Activated CD4-positive, alpha-beta T cell treated with anti-CD3 and anti-CD28 coated beads for 36 hours (primary cell): ENCODE measurements at regions of chr9 and their contacts with region 1.

Region 1: GRCh38 chr9:105414947-105415661 is 32.7 kb upstream of the FSD1L start:
- DNase-seq: peak; percentile 70
- ATAC-seq: peak; percentile 71
- H3K4me3 Mint-ChIP-seq: no peak overlapping the region
- H3K27ac Mint-ChIP-seq: no peak overlapping the region
- H3K4me1 Mint-ChIP-seq: no peaks in the 10 kb centered on the region
- H3K27me3 Mint-ChIP-seq: peaks cover 36% of the 10 kb centered on the region

Region 2: DNA sequence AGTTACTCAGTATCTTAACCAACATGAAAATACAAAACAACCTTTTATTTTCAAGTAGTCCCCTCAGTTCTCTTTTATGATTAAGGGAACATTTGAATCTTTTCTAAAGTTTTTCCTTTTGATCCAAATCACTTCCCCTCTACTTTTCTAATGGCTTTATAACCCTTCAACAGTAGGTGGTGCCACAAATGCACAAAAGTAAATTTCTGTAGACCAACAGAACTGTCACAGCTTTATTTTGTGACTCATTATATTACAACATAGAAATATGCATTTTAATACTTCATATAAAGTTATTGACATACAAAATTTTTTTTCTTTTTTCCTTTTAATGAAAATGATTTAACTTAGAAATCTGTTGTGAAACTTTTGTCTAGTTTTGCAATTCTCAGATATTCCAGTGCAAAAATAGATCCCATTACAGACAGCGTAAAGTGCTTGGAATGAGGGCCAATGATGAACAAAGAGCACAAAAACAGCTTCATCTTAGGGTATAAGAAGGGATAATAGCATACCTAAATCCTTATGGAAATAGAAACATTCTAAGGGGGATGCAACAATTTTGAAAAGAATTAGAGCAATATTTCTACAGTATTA is 634.2 kb before region 1 on chr9:
- CTCF ChIA-PET with region 1: interaction called, 4 read pairs
- POLR2A ChIA-PET with region 1: no interaction called
- intact Hi-C with region 1: loop called in 1 of 2 experiments (anchors 10 kb)
- DNase-seq: no peak
- ATAC-seq: peak; percentile 55
- H3K4me3 Mint-ChIP-seq: no peak overlapping the region
- H3K27ac Mint-ChIP-seq: no peak overlapping the region
- H3K4me1 Mint-ChIP-seq: no peaks in the 10 kb centered on the region
- H3K27me3 Mint-ChIP-seq: no peaks in the 10 kb centered on the region

Region 3: GRCh38 chr9:104795082-104795481 is 620.0 kb before region 1 on chr9:
- CTCF ChIA-PET with region 1: no interaction called
- POLR2A ChIA-PET with region 1: no interaction called
- intact Hi-C with region 1: loop called in 1 of 2 experiments (anchors 10 kb)
- DNase-seq: no peak
- ATAC-seq: no peak
- H3K4me3 Mint-ChIP-seq: no peak overlapping the region
- H3K27ac Mint-ChIP-seq: no peak overlapping the region
- H3K4me1 Mint-ChIP-seq: peaks cover 5% of the 10 kb centered on the region
- H3K27me3 Mint-ChIP-seq: no peaks in the 10 kb centered on the region

Region 4: DNA sequence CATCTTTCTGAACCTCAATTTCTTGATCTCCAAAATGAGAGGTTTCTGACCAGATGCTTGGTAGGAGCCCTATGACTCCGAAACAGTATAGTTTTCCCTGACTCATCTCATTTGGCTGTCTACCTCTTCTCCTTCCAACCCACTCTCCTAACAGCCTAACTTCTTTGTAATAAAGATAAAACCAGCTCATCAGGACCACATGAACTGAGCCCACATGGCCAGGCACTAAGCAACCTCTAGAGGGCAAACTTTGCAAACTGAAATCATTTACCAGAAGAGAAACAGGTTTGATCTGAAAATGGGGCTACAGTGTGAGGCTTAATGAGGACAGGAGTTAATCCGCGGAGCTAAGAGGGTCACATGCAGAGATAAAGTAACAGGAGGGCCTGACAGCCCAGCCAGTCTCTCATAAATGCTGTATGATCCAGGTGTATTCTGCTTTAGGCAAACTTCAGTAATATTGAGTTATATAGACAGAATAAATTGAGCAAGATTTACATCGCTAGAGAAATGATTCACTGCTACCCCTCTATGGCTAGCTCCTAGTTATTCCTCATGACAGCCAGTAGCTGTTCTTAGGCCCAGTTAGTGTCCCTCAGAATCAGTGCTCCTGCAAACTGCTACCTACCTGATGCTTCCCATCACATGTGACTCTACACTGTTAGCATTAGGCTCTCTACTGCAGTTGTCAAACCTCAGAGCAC is 551.8 kb before region 1 on chr9:
- CTCF ChIA-PET with region 1: interaction called, 3 read pairs
- POLR2A ChIA-PET with region 1: no interaction called
- intact Hi-C with region 1: loop called (anchors 1 kb)
- DNase-seq: peak; percentile 62
- ATAC-seq: peak; percentile 94
- H3K4me3 Mint-ChIP-seq: no peak overlapping the region
- H3K27ac Mint-ChIP-seq: no peak overlapping the region
- H3K4me1 Mint-ChIP-seq: peaks cover 7% of the 10 kb centered on the region
- H3K27me3 Mint-ChIP-seq: no peaks in the 10 kb centered on the region

Region 5: DNA sequence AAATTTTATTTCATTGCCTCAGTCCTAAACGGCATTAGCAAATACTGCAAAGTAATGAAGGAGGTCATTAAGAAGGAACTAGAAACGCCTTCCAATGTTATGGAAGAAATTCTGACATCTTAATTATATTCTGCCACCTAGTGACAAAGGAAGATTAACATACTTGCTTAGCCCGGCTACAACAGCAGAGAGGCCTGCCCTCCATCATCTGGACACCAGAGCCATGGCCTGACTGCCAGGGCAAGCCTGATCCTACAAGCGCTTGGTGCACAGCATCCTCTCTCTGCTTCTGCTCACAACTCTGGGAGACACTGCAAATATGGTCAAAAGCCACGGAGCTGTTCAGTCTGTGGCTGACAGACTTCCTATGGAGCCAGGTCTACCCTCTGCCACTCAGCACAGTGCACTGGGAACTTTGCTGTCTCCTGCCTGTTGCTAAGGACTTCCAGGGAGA is 257.9 kb before region 1 on chr9:
- CTCF ChIA-PET with region 1: interaction called, 5 read pairs
- POLR2A ChIA-PET with region 1: no interaction called
- intact Hi-C with region 1: loop called (anchors 1 kb)
- DNase-seq: peak; percentile 46
- ATAC-seq: peak; percentile 86
- H3K4me3 Mint-ChIP-seq: no peak overlapping the region
- H3K27ac Mint-ChIP-seq: no peak overlapping the region
- H3K4me1 Mint-ChIP-seq: peaks cover 14% of the 10 kb centered on the region
- H3K27me3 Mint-ChIP-seq: no peaks in the 10 kb centered on the region